PC-3 (cell line): ENCODE measurements at regions of chr1 and their contacts with region 1.

Region 1: GRCh38 chr1:110106013-110106941 is 6.0 kb upstream of the UBL4B start:
- DNase-seq: peak; percentile 74
- ATAC-seq: peak; percentile 94
- H3K4me3 ChIP-seq: no peak overlapping the region
- H3K27ac ChIP-seq: no peak overlapping the region
- H3K4me1 ChIP-seq: peaks cover 4% of the 10 kb centered on the region; the same call in 1 of the 2 replicates
- H3K27me3 ChIP-seq: peaks cover 26% of the 10 kb centered on the region; the same call in 1 of the 2 replicates
- CTCF ChIP-seq: peak; percentile 91

Region 2: DNA sequence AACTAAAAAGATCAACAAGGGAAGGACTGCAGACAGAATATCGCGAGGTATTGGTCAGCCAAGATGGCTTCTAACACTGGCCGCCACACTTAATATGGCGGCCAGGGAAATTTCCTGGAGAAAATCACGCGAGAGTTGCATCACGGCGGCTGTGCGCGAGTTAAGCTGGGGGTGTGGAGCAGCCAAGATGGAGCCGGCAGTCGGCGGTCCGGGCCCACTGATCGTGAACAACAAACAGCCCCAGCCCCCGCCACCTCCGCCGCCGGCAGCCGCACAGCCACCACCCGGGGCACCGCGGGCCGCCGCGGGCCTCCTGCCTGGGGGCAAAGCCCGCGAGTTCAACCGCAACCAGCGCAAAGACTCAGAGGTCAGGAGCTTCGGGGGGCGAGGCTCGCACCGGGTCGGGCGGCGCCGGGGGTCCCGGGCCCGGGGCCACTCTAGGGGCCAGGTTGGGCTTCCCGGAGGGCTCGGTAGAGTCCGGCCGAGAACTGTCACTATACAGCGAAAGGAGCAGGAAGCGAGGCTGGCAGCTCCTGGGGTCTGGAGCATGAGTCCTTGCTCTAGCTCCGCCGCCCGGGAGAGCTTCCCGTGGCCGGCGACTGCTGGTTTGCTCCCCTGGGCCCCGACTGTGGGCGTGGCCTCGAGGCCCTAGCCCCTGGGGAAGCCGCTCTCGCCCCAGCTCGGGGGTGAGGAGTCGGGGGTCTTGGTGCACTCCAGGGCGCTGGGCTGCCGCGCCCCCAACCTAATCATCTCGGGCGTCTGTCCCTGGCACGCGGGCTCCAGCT is 71.6 kb before region 1 on chr1 and contains the start of gene STRIP1:
- CTCF ChIA-PET with region 1: no interaction called
- POLR2A ChIA-PET with region 1: no interaction called
- intact Hi-C with region 1: loop called (anchors 1 kb)
- DNase-seq: peak; percentile 96
- ATAC-seq: peak; percentile 90
- H3K4me3 ChIP-seq: peak within 1 kb of the TSS; percentile 92
- H3K27ac ChIP-seq: peak within 1 kb of the TSS; percentile 33
- H3K4me1 ChIP-seq: peaks cover 21% of the 10 kb centered on the region
- H3K27me3 ChIP-seq: no peaks in the 10 kb centered on the region
- CTCF ChIP-seq: no peak
- total RNA-seq, gene STRIP1: 41.4 and 44.3 TPM in 2 replicates

Region 3: GRCh38 chr1:110053557-110054428 is 52.5 kb before region 1 on chr1:
- CTCF ChIA-PET with region 1: no interaction called
- POLR2A ChIA-PET with region 1: no interaction called
- intact Hi-C with region 1: loop called (anchors 1 kb)
- DNase-seq: peak; percentile 62
- ATAC-seq: peak; percentile 78
- H3K4me3 ChIP-seq: no peak overlapping the region
- H3K27ac ChIP-seq: no peak overlapping the region
- H3K4me1 ChIP-seq: no peaks in the 10 kb centered on the region
- H3K27me3 ChIP-seq: no peaks in the 10 kb centered on the region
- CTCF ChIP-seq: peak; percentile 94

Region 4: DNA sequence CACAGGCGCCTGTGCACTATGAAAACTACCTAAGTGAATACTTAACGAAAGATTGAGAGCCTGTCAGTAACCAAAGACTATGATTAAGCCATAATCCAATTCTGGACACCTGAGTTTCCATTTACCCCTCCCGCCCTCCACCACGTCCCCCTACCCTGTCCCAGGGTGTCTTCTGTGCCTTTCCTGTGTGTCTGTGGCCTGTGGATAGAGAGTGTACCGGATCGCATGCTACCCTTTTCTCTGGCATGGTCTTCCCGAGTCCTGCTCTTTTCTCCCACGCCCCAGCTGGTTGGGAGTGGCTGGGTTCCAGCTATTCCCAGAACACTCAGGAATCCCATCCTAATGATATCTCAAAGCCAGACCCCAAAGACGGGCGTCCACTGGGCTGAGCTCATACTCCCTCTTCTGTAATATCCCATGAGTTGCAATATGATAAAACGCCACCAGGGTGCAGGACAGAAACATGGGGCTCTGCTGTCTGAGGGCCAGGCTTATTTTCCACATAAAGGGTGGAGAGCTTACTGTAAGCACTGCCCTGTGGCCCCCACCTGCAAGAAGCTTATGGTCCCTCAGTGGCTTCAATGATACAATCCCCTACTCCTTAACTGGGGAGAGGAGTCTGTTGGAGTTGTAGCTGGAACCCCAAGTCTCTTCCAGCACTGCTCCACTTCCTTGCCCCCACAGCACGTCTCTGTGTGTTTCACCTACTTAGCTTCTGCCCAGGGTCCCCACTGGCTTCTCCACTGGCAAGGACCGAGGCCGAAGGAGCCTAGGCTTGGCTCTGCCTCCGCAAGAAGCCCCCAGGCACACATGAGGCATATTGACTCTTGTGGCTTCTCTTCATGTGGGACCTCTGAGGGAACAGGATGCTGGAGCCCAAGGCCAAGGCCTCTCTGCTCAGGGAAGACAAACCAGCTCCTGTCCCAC is 18.2 kb before region 1 on chr1:
- CTCF ChIA-PET with region 1: interaction called, 4 read pairs
- POLR2A ChIA-PET with region 1: no interaction called
- intact Hi-C with region 1: loop called (anchors 1 kb)
- DNase-seq: peak; percentile 76
- ATAC-seq: peak; percentile 96
- H3K4me3 ChIP-seq: no peak overlapping the region
- H3K27ac ChIP-seq: no peak overlapping the region
- H3K4me1 ChIP-seq: no peaks in the 10 kb centered on the region
- H3K27me3 ChIP-seq: 0 out of 2 replicates have a peak, but pooled peaks cover 5% of the 10 kb centered on the region
- CTCF ChIP-seq: peak; percentile 72

Region 5: GRCh38 chr1:110118636-110119615 is 12.6 kb after region 1 on chr1:
- CTCF ChIA-PET with region 1: interaction called, 11 read pairs
- POLR2A ChIA-PET with region 1: no interaction called
- intact Hi-C with region 1: no loop called
- DNase-seq: peak; percentile 26
- ATAC-seq: no peak
- H3K4me3 ChIP-seq: no peak overlapping the region
- H3K27ac ChIP-seq: no peak overlapping the region
- H3K4me1 ChIP-seq: no peaks in the 10 kb centered on the region; the same call in 1 of the 2 replicates
- H3K27me3 ChIP-seq: peaks cover 16% of the 10 kb centered on the region
- CTCF ChIP-seq: no peak